Mammary epithelial cell (primary cell): ENCODE measurements at regions of chr22 and their contacts with region 1.

Region 1: DNA sequence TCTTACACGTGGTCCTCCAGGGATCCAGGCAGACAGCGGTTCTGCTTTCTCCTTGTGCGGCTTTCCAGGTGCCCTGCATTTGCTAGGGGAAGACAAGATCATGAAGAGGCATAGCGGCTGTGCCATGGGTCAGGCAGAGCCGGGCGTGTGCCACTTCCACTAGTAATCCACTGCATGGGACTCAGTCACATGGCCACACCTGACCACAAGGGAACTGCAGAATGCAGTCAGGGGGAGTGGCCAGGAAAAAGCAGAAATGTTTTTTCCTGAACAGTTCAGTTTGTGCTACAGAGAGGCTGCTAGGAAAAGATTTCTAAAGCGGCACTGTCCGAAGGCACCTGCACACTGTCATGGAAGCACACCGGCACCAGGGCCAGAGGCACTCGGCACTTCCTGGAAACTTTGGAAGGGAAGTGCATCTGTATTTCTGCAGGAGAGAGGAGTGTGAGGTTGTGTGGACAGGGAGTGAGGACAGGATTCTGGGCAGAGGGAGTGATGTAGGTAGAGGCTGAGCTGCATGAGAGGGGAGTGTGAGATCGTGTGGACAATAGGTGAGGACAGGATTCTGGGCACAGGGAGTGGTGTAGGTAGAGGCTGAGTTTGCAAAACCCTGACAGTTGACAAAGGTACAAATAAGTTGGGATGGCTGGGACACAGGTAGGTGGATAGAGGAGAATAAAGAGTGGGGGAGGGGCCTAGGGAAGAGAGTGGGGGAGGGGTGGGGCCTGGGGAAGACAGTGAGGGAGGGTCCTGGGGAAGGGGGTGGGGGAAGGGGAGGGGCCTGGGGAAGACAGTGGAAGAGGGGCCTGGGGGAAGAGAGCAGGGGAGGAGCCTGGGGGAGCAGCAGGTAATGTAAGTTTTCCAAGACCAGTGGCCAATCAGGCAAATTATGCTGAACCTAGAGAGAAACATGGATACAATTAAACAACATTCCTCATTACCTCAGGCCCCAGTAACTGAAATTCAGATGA is 1436.3 kb downstream of the TBC1D22A start:
- DNase-seq: no peak
- H3K4me3 ChIP-seq: no peak overlapping the region
- H3K27ac ChIP-seq: no peak overlapping the region
- H3K4me1 ChIP-seq: no peaks in the 10 kb centered on the region
- H3K27me3 ChIP-seq: no peaks in the 10 kb centered on the region
- CTCF ChIP-seq: no peak

Region 2: DNA sequence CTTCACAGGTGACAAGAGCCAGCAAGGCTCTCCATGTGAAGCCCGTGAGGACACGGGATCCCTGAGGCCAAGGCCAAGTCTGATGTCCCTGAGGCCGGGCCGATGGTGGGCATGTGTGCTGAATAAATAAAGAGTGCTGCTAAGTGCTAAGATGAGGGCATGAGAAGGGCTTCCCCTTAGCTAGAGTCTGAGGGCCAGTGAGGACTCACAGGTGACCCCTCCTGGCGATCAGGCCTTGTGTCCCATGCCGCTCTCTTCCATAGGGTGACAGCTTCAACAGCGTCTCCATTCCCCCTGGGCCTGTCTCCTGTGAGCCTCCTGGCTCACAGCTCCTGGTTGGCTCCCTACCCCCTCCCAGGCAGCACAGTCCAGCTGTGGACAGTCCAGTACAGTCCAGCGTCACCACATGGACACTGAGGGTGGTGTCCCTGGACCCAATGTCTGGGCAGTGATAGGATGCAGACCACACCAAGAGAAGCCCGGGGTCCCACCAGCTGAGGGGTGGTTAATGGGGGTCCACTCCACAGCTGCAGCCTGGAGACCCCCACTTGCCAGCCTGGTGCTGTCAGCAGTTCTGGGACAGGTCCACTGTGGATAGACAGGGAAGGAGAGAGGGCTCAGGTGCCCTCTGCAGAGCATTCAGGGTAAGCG is 403.2 kb before region 1 on chr22:
- CTCF ChIA-PET with region 1: no interaction called
- dilution Hi-C with region 1: no loop called
- in situ Hi-C with region 1: no loop called
- intact Hi-C with region 1: no loop called
- DNase-seq: no peak
- H3K4me3 ChIP-seq: no peak overlapping the region
- H3K27ac ChIP-seq: no peak overlapping the region
- H3K4me1 ChIP-seq: no peaks in the 10 kb centered on the region
- H3K27me3 ChIP-seq: no peaks in the 10 kb centered on the region
- CTCF ChIP-seq: no peak

Region 3: DNA sequence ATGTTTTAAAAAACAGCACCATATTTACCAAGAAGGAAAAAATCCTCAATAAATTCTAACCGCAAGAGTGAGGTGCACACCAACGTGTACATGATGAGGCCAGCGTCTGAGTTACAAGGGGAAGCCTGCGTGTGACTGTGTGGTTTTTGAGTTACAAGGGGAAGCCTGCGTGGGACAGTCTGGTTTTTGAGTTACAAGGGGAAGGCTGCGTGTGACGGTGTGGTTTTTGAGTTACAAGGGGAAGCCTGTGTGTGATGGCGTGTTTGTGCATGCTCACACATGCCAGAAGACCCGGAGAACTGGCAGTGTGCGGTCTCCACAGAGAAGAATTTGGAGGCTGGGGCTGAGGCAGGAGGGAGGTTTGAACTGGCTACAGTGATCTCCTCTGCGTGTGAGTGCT is 59.9 kb before region 1 on chr22:
- CTCF ChIA-PET with region 1: no interaction called
- dilution Hi-C with region 1: no loop called
- in situ Hi-C with region 1: no loop called
- intact Hi-C with region 1: no loop called
- DNase-seq: no peak
- H3K4me3 ChIP-seq: no peak overlapping the region
- H3K27ac ChIP-seq: no peak overlapping the region
- H3K4me1 ChIP-seq: no peaks in the 10 kb centered on the region
- H3K27me3 ChIP-seq: no peaks in the 10 kb centered on the region
- CTCF ChIP-seq: no peak

Region 4: GRCh38 chr22:48153726-48154125 is 45.0 kb before region 1 on chr22:
- CTCF ChIA-PET with region 1: no interaction called
- dilution Hi-C with region 1: loop called (anchors 5 kb)
- in situ Hi-C with region 1: no loop called
- intact Hi-C with region 1: no loop called
- DNase-seq: no peak
- H3K4me3 ChIP-seq: no peak overlapping the region
- H3K27ac ChIP-seq: no peak overlapping the region
- H3K4me1 ChIP-seq: no peaks in the 10 kb centered on the region
- H3K27me3 ChIP-seq: no peaks in the 10 kb centered on the region
- CTCF ChIP-seq: no peak

Region 5: DNA sequence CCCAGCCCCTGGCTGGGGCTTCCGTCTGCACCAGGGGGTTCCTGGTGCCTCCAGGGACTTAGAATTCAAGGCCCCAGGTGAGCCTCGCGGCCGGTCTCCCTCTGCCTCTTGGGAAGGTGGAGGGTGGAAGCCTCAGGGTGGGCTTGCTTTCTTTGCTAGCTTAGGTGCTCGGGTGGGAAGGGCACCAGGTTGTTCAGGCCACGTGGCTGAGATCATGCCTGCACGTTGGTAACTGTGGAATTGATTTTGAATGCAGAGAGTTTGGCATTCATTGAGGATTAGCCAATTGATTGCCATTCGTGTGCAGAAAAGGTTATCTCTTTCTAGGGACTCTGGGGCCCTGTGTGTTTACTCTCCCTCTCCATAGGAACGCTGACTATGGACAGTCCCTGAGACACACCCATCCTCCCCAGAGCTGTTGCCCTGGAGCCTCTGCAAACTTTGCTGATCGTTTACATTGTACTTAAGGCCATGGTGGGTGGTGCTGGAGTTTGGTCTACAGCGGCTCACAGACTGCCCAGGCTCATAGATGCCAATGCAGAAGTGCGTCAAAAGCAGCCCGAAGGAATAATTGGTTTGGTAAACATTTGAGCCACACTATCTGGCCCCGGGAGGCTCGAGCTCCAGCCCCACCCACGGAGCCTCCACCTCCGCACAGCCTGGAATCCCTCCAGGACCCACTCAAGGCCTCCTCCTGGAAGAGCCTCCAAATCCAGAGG is 171.2 kb after region 1 on chr22:
- CTCF ChIA-PET with region 1: no interaction called
- dilution Hi-C with region 1: no loop called
- in situ Hi-C with region 1: no loop called
- intact Hi-C with region 1: no loop called
- DNase-seq: no peak
- H3K4me3 ChIP-seq: no peak overlapping the region
- H3K27ac ChIP-seq: no peak overlapping the region
- H3K4me1 ChIP-seq: no peaks in the 10 kb centered on the region
- H3K27me3 ChIP-seq: no peaks in the 10 kb centered on the region
- CTCF ChIP-seq: no peak